HCT116 (cell line): ENCODE measurements at regions of chr3 and their contacts with region 1.

Region 1: DNA sequence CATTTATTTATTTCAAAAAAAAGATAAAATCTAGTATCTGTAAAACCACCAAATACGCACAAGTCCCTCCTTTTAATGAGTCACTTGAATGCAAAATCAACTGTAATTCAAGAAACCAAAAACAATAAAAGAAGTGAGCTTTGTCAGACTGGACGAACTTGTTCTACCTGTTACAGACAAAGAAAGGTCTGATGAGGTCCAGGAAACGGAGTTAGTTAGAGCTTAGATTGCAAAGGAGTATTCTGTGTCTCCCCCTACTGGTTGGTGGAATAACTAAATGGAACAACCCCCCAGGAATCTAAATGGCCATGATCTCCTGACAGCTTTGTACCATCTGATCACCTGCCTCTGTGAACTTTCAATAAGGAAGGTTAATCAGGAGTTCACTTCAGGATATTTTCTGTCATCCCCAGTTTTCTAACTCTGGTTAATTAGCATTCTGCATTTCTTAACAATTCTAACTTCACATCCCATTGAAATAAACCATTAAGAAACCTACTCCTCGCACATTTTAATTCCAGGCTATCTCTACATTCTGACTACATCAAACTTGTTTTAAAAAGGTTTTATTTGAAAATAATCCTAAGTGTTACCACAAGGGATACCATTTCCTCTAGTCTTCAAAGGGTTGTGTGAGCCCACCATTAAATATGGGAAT is 333.0 kb upstream of the SATB1 start:
- DNase-seq: peak; percentile 63
- ATAC-seq: peak; percentile 84
- H3K4me3 ChIP-seq: no peak overlapping the region
- H3K27ac ChIP-seq: no peak overlapping the region
- H3K4me1 ChIP-seq: peaks cover 0 to 3% of the 10 kb centered on the region in 2 experiments; a peak in 1 of 4 replicates
- H3K27me3 ChIP-seq: no peaks in the 10 kb centered on the region
- CTCF ChIP-seq: peak; percentile 43 to 71 (median 59); a peak in 5 of 6 replicates
- POLR2A ChIP-seq: no peak
- RAD21 ChIP-seq: peak; percentile 64

Region 2: DNA sequence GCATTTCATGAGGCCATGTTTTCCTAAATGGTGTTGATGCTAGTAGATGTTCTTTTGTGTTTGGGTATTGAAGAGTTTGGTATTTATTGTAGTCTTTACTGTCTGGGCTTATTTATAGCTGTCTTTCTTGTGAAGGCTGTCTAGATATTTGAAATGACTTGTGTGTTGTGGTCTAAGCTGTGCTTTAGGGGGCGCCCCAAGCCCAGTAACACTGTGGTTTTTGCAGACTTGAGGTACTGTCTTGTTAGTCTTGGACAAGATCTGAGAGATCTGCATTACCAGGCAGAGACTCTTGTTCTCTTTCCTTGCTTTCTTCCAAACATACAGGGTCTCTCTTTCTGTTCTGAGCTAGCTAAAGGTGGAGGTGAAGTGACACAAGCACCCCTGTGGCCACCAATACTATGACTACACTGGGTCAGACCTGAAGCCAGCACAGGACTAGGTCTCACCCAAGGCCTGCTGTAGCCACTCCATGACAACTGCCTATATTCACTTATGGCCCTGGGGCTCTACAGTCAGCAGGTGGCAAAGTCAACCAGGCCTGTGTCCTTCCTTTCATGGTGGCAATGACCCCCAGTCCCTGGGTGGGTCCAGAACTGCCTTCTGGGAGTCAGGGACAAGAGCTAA is 863.6 kb before region 1 on chr3:
- CTCF ChIA-PET with region 1: interaction called, 4 read pairs
- POLR2A ChIA-PET with region 1: no interaction called
- RAD21 ChIA-PET with region 1: no interaction called
- intact Hi-C with region 1: loop called (anchors 10 kb)
- DNase-seq: peak; percentile 56
- ATAC-seq: peak; percentile 95
- H3K4me3 ChIP-seq: no peak overlapping the region
- H3K27ac ChIP-seq: no peak overlapping the region
- H3K4me1 ChIP-seq: peaks cover 0 to 7% of the 10 kb centered on the region in 2 experiments; a peak in 1 of 4 replicates
- H3K27me3 ChIP-seq: no peaks in the 10 kb centered on the region
- CTCF ChIP-seq: peak; percentile 70 to 79 (median 71); a peak in 5 of 6 replicates
- POLR2A ChIP-seq: no peak
- RAD21 ChIP-seq: peak; percentile 87

Region 3: GRCh38 chr3:18559331-18559842 is 198.8 kb before region 1 on chr3:
- CTCF ChIA-PET with region 1: interaction called, 9 read pairs
- POLR2A ChIA-PET with region 1: no interaction called
- RAD21 ChIA-PET with region 1: no interaction called
- intact Hi-C with region 1: loop called (anchors 5 kb)
- DNase-seq: peak; percentile 21
- ATAC-seq: peak; percentile 73
- H3K4me3 ChIP-seq: no peak overlapping the region
- H3K27ac ChIP-seq: no peak overlapping the region
- H3K4me1 ChIP-seq: no peaks in the 10 kb centered on the region
- H3K27me3 ChIP-seq: peaks cover 14% of the 10 kb centered on the region; the same call in 1 of the 2 replicates
- CTCF ChIP-seq: peak; percentile 32 to 64 (median 63); a peak in 4 of 6 replicates
- POLR2A ChIP-seq: no peak
- RAD21 ChIP-seq: peak; percentile 47